Activated B cell treated with CpG ODN at 0.5 μM for 24 hours (primary cell): ENCODE measurements at regions of chr3 and their contacts with region 1.

Region 1: DNA sequence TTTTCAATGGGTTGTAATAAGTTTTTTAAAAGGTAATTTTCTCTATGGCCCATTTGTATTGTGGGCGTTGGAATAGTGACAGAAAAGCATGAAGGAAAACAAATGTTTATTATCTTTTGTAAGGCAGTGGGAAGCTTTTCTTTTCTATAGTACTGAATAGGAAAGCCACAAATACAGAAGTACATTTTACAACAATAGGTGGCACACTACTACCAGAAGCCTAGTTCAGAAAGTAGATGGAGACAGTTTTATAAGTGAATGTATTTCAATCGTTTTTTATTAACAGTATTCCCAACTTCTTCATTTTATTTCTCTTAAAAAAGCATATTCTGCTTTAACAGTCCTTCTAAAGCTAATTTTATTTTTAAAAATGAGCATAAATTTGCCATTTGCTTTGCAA is 296.7 kb downstream of the PTPRG start:
- DNase-seq: no peak
- ATAC-seq: no peak
- H3K4me3 Mint-ChIP-seq: no peak overlapping the region
- H3K27ac Mint-ChIP-seq: no peak overlapping the region
- H3K4me1 Mint-ChIP-seq: no peaks in the 10 kb centered on the region
- H3K27me3 Mint-ChIP-seq: no peaks in the 10 kb centered on the region
- CTCF ChIP-seq: no peak

Region 2: GRCh38 chr3:61936344-61936937 is 78.4 kb after region 1 on chr3:
- CTCF ChIA-PET with region 1: interaction called, 6 read pairs
- POLR2A ChIA-PET with region 1: no interaction called
- intact Hi-C with region 1: loop called (anchors 1 kb)
- DNase-seq: no peak
- ATAC-seq: no peak
- H3K4me3 Mint-ChIP-seq: no peak overlapping the region
- H3K27ac Mint-ChIP-seq: no peak overlapping the region
- H3K4me1 Mint-ChIP-seq: no peaks in the 10 kb centered on the region
- H3K27me3 Mint-ChIP-seq: no peaks in the 10 kb centered on the region
- CTCF ChIP-seq: no peak